ENCODE measurements at regions of chr1 and their contacts with region 1.

Region 1: GRCh38 chr1:20696397-20697329 is 21.1 kb downstream of the KIF17 start:
- DNase-seq: peak; percentile 96

Region 2: DNA sequence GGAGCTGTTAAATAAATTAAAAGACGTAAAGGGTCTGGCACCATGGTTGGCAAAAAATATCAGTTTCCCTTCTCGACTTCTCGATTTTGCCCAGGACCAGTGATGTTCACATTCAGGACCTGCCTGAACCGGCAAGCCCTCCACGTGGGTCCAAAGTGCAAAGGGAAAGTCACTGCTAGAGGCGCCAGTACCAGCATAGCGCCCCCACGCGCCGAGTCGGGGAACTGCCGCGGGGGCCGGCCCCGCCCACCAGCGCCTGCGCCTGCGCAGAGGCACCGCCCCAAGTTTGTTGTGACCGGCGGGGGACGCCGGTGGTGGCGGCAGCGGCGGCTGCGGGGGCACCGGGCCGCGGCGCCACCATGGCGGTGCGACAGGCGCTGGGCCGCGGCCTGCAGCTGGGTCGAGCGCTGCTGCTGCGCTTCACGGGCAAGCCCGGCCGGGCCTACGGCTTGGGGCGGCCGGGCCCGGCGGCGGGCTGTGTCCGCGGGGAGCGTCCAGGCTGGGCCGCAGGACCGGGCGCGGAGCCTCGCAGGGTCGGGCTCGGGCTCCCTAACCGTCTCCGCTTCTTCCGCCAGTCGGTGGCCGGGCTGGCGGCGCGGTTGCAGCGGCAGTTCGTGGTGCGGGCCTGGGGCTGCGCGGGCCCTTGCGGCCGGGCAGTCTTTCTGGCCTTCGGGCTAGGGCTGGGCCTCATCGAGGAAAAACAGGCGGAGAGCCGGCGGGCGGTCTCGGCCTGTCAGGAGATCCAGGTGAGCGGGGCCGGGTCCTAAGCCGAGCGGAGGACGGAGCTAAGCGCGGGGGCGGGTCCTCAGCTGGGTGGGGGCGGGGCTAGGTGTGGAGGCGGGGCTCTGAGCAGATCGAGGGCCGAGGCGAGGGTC is 63.2 kb before region 1 on chr1 and contains the start of gene PINK1:
- intact Hi-C with region 1: no loop called
- DNase-seq: peak; percentile 95
- total RNA-seq, gene PINK1: 64.8 to 95.9 TPM

Region 3: DNA sequence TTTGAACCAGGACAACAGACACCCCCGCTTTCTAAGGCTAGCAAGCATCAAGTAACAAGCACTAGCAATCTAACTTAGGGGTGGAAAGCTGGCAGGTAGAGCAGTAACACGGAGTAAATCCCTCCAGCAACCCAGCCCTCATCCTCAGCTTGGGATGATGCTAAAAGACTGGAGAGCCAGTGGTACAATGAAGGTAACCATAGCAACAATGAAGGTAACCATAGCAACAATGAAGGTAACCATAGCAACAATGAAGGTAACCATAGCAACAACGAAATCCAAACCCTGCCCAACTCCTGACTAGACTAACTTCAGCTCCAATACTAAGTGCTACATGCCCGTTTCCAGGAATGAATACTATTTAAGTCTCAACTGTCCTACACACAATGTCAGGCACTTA is 502.3 kb after region 1 on chr1:
- intact Hi-C with region 1: loop called (anchors 5 kb)
- DNase-seq: no peak